Gastrocnemius medialis (tissue), 4 donors: ENCODE measurements at regions of chr5 and their contacts with region 1.

Region 1: GRCh38 chr5:95664204-95664786 is 17.7 kb downstream of the RFESD start:
- DNase-seq: no peak
- ATAC-seq: peak in 1 of 2 donors; percentile 64
- H3K4me3 ChIP-seq: no peak overlapping the region
- H3K27ac ChIP-seq: peak overlapping the region in 3 of 4 donors; percentile 6 to 54 (median 44)
- H3K4me1 ChIP-seq: peaks cover 9 to 12% of the 10 kb centered on the region in 2 donors
- H3K27me3 ChIP-seq: no peaks in the 10 kb centered on the region
- CTCF ChIP-seq: peak; percentile 60 to 94 (median 79)
- POLR2A ChIP-seq: no peak

Region 2: DNA sequence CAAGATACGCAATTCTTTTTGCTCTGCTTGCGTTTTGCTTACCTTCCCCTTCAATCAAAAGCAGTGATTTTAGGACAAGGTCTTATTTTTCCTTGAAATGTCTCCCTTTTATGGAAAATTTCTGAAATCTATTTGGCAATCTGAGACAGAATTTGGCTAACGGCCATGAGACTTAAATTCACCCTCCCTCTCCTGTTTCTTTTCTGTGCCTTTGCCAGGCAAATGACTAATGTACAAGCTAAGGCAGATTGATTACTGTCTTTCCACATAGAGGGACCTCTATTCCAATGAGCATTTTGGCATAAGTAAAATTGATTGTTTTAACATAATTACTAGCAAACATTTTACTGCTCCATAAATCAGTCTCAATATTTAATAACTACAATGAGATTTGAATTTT is 241.5 kb before region 1 on chr5:
- in situ Hi-C with region 1: no loop called
- intact Hi-C with region 1: no loop called
- DNase-seq: no peak
- ATAC-seq: no peak
- H3K4me3 ChIP-seq: no peak overlapping the region
- H3K27ac ChIP-seq: no peak overlapping the region
- H3K4me1 ChIP-seq: no peaks in the 10 kb centered on the region
- H3K27me3 ChIP-seq: no peaks in the 10 kb centered on the region
- CTCF ChIP-seq: no peak
- POLR2A ChIP-seq: no peak

Region 3: GRCh38 chr5:95446009-95446408 is 218.3 kb before region 1 on chr5:
- in situ Hi-C with region 1: no loop called
- intact Hi-C with region 1: no loop called
- DNase-seq: no peak
- ATAC-seq: no peak
- H3K4me3 ChIP-seq: no peak overlapping the region
- H3K27ac ChIP-seq: no peak overlapping the region
- H3K4me1 ChIP-seq: no peaks in the 10 kb centered on the region
- H3K27me3 ChIP-seq: no peaks in the 10 kb centered on the region
- CTCF ChIP-seq: no peak
- POLR2A ChIP-seq: no peak

Region 4: DNA sequence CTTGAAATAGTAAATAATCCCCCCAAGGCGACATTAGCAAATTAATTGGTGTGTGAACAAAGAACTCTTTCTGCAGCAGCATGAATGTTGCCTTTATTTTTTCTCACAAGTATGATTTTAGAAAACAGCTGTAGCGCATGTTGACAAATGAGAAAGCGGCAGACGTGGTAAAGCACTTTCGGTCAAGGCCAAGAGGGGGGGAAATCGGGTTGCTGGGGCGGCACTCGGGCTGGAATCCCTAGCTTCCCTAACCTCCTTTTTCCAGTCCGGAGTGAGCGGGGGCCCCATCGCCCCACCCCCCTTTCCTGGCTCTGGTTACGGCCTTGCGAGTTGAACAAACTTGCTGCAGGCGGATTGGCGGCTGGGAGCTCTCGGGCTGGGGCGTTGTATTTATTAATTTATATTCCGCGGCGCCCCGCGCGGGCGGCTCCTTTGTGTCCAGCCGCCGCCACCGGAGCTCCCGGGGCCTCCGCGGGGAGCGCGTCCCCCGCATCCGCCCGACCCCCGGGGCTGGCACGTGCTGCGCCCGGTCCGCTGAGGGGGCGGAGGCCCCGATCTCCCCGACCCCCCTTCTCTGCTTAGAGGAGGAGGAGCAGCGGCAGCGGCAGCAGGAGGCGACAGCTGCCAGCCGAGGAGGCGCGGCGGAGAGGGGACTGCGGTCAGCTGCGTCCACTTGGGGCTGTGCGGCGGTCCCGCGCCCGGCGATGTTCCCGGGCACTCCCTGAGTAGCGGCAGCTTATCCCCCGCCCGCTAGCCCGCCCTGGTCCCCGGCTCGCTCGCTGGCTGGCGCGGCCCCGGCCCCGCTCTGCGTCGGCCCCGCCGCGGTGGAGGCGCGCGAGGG is 66.7 kb after region 1 on chr5 and contains the start of gene RHOBTB3:
- in situ Hi-C with region 1: loop called in 2 of 4 experiments (anchors 5 to 10 kb)
- intact Hi-C with region 1: loop called (anchors 1 kb)
- DNase-seq: peak; percentile 89 to 91
- ATAC-seq: peak; percentile 69 to 72
- H3K4me3 ChIP-seq: peak within 1 kb of the TSS; percentile 80 to 87 (median 85)
- H3K27ac ChIP-seq: peak within 1 kb of the TSS; percentile 91 to 96 (median 94)
- H3K4me1 ChIP-seq: peaks cover 39 to 48% of the 10 kb centered on the region in 2 donors
- H3K27me3 ChIP-seq: no peaks in the 10 kb centered on the region
- CTCF ChIP-seq: peak in 1 of 5 experiments; percentile 16
- POLR2A ChIP-seq: peak; percentile 88 to 92
- total RNA-seq, gene RHOBTB3: 40.1 to 134 (median 86.9) TPM

Region 5: DNA sequence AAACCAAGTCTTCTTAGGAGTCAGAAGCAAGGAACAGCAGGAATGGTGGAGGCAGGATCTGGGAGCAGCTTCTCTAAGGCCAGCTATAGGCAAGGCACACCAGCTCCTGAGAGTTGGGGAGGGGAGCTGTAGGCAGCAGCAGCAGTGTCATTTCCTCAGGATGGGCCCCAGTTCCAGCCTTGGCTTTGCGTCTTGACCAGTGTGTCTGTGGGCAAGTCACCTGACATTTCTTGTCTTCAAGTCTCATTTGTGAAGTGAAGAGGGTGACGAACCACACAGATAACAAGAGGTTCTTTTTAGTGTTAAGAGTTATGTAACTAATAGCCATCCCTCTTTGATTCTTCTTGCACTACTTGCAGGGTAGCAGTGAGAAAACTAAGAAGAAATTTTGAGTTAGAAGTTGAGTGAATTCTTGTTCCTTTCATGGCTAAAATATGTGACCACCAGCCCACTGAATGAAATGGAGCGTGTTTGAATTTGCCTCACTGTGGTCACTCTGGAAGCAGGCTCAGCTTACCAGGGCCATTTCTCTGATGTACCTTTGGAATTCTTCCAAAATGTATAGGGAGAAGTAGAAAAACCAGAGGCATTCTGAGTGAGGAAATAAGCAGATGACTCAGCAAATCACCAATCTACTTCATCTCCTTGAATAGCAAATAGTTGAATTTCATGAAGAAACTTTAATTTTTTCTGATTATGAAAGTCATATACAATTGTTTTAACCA is 109.2 kb after region 1 on chr5:
- in situ Hi-C with region 1: loop called in 1 of 4 experiments (anchors 10 kb)
- intact Hi-C with region 1: loop called (anchors 5 kb)
- DNase-seq: no peak
- ATAC-seq: no peak
- H3K4me3 ChIP-seq: no peak overlapping the region
- H3K27ac ChIP-seq: peak overlapping the region in 3 of 4 donors; percentile 2 to 33 (median 4)
- H3K4me1 ChIP-seq: peaks cover 9 to 41% of the 10 kb centered on the region in 2 donors
- H3K27me3 ChIP-seq: no peaks in the 10 kb centered on the region
- CTCF ChIP-seq: no peak
- POLR2A ChIP-seq: no peak